GM12878 (cell line): ENCODE measurements at regions of chr1 and their contacts with region 1.

Region 1: GRCh38 chr1:58739856-58740466 is 40.1 kb upstream of the MYSM1 start:
- DNase-seq: no peak
- ATAC-seq: peak; percentile 74
- H3K4me3 ChIP-seq: no peak overlapping the region
- H3K27ac ChIP-seq: no peak overlapping the region
- H3K4me1 ChIP-seq: no peaks in the 10 kb centered on the region
- H3K27me3 ChIP-seq: peaks cover 0 to 3% of the 10 kb centered on the region in 2 experiments; a peak in 2 of 4 replicates
- CTCF ChIP-seq: peak; percentile 48 to 79 (median 72); a peak in 5 of 6 replicates
- EP300 ChIP-seq: no peak
- POLR2A ChIP-seq: no peak
- RAD21 ChIP-seq: peak; percentile 99

Region 2: DNA sequence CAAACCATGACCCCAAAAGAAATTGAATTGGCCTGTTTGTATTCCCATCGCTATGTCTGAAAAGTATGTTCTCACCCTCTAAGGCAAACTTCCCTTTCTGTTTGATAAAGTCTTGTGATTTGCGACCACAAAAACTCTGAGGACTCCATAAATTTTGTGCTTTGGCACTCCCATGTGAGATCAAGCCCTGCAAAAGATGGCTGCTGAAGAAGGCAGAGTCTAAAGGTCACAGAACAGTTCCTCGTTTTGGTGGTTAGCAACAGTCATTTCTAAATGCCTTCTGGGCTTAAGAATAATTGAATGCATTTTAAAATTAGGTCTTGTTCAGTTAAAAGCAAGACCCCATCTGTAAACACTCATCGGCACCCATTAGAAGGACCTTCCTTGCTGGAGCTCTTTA is 635.0 kb before region 1 on chr1:
- CTCF ChIA-PET with region 1: no interaction called
- POLR2A ChIA-PET with region 1: no interaction called
- RAD21 ChIA-PET with region 1: no interaction called
- SMC1A ChIA-PET with region 1: no interaction called
- in situ Hi-C with region 1: no loop called
- intact Hi-C with region 1: no loop called
- DNase-seq: peak; percentile 68
- ATAC-seq: peak; percentile 80
- H3K4me3 ChIP-seq: no peak overlapping the region
- H3K27ac ChIP-seq: no peak overlapping the region
- H3K4me1 ChIP-seq: peaks cover 21% of the 10 kb centered on the region
- H3K27me3 ChIP-seq: no peaks in the 10 kb centered on the region
- CTCF ChIP-seq: no peak
- EP300 ChIP-seq: peak; percentile 90 to 97
- POLR2A ChIP-seq: no peak
- RAD21 ChIP-seq: no peak

Region 3: GRCh38 chr1:58789322-58789856 is 49.4 kb after region 1 on chr1:
- CTCF ChIA-PET with region 1: no interaction called
- POLR2A ChIA-PET with region 1: no interaction called
- RAD21 ChIA-PET with region 1: no interaction called
- SMC1A ChIA-PET with region 1: no interaction called
- in situ Hi-C with region 1: no loop called
- intact Hi-C with region 1: no loop called
- DNase-seq: no peak
- ATAC-seq: no peak
- H3K4me3 ChIP-seq: no peak overlapping the region
- H3K27ac ChIP-seq: no peak overlapping the region
- H3K4me1 ChIP-seq: peaks cover 7% of the 10 kb centered on the region
- H3K27me3 ChIP-seq: no peaks in the 10 kb centered on the region
- CTCF ChIP-seq: no peak
- EP300 ChIP-seq: no peak
- POLR2A ChIP-seq: no peak
- RAD21 ChIP-seq: no peak

Region 4: DNA sequence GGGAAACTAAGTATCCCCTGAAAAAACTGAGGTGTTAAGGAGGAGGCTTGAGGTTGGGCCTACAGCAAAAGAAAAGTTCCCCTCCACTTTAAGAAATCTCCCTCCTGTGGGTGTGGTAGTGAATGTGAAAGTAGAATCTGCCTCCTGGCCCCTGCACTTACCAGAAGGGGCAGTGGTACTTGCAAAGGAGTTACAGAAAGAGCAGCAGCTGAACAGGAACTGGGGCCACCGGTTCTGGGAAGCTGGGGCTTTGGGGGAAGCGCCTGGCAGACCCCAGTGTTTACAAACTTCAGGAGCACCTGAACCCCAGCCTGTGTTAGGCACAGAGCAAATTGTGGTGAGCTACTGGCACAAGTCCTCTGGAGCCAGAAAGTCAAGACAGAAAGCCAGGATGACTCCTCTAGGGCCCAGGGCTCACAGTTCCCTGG is 306.8 kb after region 1 on chr1:
- CTCF ChIA-PET with region 1: no interaction called
- POLR2A ChIA-PET with region 1: no interaction called
- RAD21 ChIA-PET with region 1: no interaction called
- SMC1A ChIA-PET with region 1: no interaction called
- in situ Hi-C with region 1: no loop called
- intact Hi-C with region 1: loop called (anchors 1 kb)
- DNase-seq: peak; percentile 59
- ATAC-seq: peak; percentile 99
- H3K4me3 ChIP-seq: no peak overlapping the region
- H3K27ac ChIP-seq: peak overlapping the region; percentile 70
- H3K4me1 ChIP-seq: peaks cover 26% of the 10 kb centered on the region
- H3K27me3 ChIP-seq: no peaks in the 10 kb centered on the region
- CTCF ChIP-seq: peak; percentile 42 to 45 (median 44); a peak in 5 of 6 replicates
- EP300 ChIP-seq: peak in 1 of 2 experiments; percentile 45; a peak in 1 of 4 replicates
- POLR2A ChIP-seq: no peak
- RAD21 ChIP-seq: peak; percentile 66

Region 5: GRCh38 chr1:59432531-59433439 is 692.8 kb after region 1 on chr1:
- CTCF ChIA-PET with region 1: no interaction called
- POLR2A ChIA-PET with region 1: no interaction called
- RAD21 ChIA-PET with region 1: no interaction called
- SMC1A ChIA-PET with region 1: no interaction called
- in situ Hi-C with region 1: no loop called
- intact Hi-C with region 1: loop called (anchors 10 kb)
- DNase-seq: peak; percentile 69
- ATAC-seq: peak; percentile 96
- H3K4me3 ChIP-seq: no peak overlapping the region
- H3K27ac ChIP-seq: peak overlapping the region; percentile 53; the same call in 1 of the 2 replicates
- H3K4me1 ChIP-seq: peaks cover 16% of the 10 kb centered on the region
- H3K27me3 ChIP-seq: no peaks in the 10 kb centered on the region
- CTCF ChIP-seq: no peak
- EP300 ChIP-seq: peak; percentile 83 to 89; a peak in 3 of 4 replicates
- POLR2A ChIP-seq: no peak
- RAD21 ChIP-seq: no peak

Region 6: DNA sequence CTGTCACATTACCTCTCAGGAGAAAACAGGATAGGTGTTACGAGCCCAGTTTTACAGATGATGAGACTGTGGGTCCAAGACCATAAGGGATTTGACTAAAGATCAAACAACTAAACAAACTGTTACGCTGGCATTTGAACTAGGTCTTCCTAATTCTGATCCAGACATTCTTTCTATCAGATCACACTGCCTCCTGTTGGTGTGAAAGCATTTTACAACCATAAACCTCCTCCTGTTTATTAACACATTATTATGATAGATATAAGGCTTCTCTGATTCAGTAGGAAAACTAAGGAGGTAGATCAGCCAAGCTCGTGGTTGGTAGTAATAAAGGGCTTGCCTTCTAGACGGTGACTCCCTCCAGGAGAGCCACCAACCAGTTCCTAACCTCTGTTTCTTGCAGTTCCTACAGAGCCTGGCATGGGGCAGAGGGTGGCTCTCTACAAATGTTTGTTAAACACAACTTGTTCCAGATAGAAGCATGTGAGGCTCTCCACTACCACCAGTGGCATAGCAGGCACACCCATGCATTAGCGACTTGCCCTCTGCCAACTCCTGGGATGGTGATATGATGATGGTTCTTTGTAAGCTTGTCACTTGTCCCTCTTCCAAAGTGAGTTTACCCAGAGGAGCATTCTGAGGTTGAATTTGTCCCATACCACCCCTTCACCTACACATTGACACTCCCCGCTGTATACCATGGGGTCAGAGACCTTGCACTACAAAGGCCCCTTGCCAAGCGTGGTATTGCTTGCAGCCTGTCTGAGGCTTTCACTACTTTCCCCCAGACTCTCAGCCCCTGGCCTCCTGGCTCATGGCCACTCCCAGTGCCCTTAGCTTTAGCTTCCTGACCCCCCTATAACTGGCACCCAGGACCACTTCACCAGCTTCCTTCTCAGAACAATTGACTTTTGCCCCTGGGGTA is 978.4 kb after region 1 on chr1:
- CTCF ChIA-PET with region 1: no interaction called
- POLR2A ChIA-PET with region 1: no interaction called
- RAD21 ChIA-PET with region 1: no interaction called
- SMC1A ChIA-PET with region 1: interaction called, 3 read pairs
- in situ Hi-C with region 1: loop called (anchors 25 kb)
- intact Hi-C with region 1: no loop called
- DNase-seq: no peak
- ATAC-seq: no peak; the same call in 2 of the 3 replicates
- H3K4me3 ChIP-seq: no peak overlapping the region
- H3K27ac ChIP-seq: no peak overlapping the region
- H3K4me1 ChIP-seq: no peaks in the 10 kb centered on the region
- H3K27me3 ChIP-seq: no peaks in the 10 kb centered on the region
- CTCF ChIP-seq: peak in 2 of 3 experiments; percentile 35 to 38; a peak in 2 of 6 replicates
- EP300 ChIP-seq: no peak
- POLR2A ChIP-seq: no peak
- RAD21 ChIP-seq: peak; percentile 50

Region 7: GRCh38 chr1:59759156-59759925 is 1019.4 kb after region 1 on chr1:
- CTCF ChIA-PET with region 1: interaction called, 23 read pairs
- POLR2A ChIA-PET with region 1: no interaction called
- RAD21 ChIA-PET with region 1: interaction called, 8 read pairs
- SMC1A ChIA-PET with region 1: interaction called, 11 read pairs
- in situ Hi-C with region 1: loop called (anchors 5 kb)
- intact Hi-C with region 1: loop called (anchors 1 kb)
- DNase-seq: peak; percentile 46
- ATAC-seq: peak; percentile 98
- H3K4me3 ChIP-seq: no peak overlapping the region
- H3K27ac ChIP-seq: no peak overlapping the region
- H3K4me1 ChIP-seq: no peaks in the 10 kb centered on the region
- H3K27me3 ChIP-seq: no peaks in the 10 kb centered on the region
- CTCF ChIP-seq: peak; percentile 91 to 97 (median 96)
- EP300 ChIP-seq: no peak
- POLR2A ChIP-seq: no peak
- RAD21 ChIP-seq: peak; percentile 98